Activated CD8-positive, alpha-beta T cell treated with anti-CD3 and anti-CD28 coated beads for 36 hours (primary cell): ENCODE measurements at regions of chr5 and their contacts with region 1.

Region 1: GRCh38 chr5:138352071-138352721 is at the start of gene KDM3B:
- DNase-seq: peak; percentile 88
- ATAC-seq: peak; percentile 91
- H3K4me3 Mint-ChIP-seq: peak within 1 kb of the TSS; percentile 92
- H3K27ac Mint-ChIP-seq: peak within 1 kb of the TSS; percentile 91
- H3K4me1 Mint-ChIP-seq: peaks cover 45% of the 10 kb centered on the region
- H3K27me3 Mint-ChIP-seq: no peaks in the 10 kb centered on the region
- CTCF ChIP-seq: peak; percentile 99
- total RNA-seq, gene KDM3B: 41.6 to 41.9 TPM

Region 2: GRCh38 chr5:138178516-138179276 is 173.5 kb before region 1 on chr5 and contains the starts of genes BRD8 and KIF20A:
- CTCF ChIA-PET with region 1: interaction called, 35 read pairs
- POLR2A ChIA-PET with region 1: interaction called, 12 read pairs
- intact Hi-C with region 1: no loop called
- DNase-seq: peak; percentile 98
- ATAC-seq: peak; percentile 91
- H3K4me3 Mint-ChIP-seq: no peak within 1 kb of the TSS
- H3K27ac Mint-ChIP-seq: no peak within 1 kb of the TSS
- H3K4me1 Mint-ChIP-seq: peaks cover 20% of the 10 kb centered on the region
- H3K27me3 Mint-ChIP-seq: no peaks in the 10 kb centered on the region
- CTCF ChIP-seq: no peak
- total RNA-seq, gene BRD8: 42.0 to 46.3 TPM
- total RNA-seq, gene KIF20A: 50.7 to 51.4 TPM

Region 3: DNA sequence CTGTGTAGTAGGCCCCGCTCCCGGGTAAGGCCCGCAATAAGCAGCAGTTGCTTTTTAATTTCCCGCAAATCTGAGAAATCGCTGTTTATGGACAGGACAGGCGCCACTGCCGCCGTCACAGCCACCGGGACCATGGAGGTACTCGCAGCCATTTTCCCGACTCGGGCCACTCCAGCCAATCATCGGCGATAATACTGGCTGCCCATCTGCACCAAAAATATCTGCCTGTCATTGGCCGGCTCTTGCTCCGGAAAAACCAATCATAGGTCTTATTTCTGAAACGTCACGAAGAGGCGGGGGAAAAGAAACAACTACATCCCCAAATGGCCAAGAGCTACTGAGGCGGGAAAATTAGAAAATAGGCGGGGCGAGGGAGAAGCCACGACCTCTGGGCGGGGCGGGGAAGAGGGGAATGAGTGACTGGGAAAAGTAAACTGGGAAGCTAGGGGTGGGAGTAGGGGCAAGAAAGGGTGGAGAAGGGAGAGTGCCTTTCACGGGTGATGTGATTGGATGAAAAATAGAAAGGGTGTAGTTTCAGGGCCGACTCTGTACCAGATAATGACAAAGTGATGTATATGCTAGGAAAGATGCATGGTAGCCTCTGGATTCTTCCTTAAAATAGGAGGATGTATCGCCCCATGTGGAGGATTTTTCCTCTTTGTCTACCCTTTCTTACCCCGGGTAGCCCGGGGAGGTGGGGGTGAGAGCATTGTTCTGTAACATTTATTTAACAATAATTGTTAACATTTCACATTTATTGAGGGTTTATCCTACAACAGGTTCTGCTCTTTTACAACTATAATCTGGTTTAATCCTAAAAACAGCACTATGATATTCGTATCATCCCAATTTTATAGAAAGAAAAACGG is 138.8 kb before region 1 on chr5 and contains the start of gene CDC23:
- CTCF ChIA-PET with region 1: interaction called, 36 read pairs
- POLR2A ChIA-PET with region 1: interaction called, 5 read pairs
- intact Hi-C with region 1: no loop called
- DNase-seq: peak; percentile 95
- ATAC-seq: peak; percentile 97
- H3K4me3 Mint-ChIP-seq: peak within 1 kb of the TSS; percentile 94
- H3K27ac Mint-ChIP-seq: peak within 1 kb of the TSS; percentile 98
- H3K4me1 Mint-ChIP-seq: peaks cover 16% of the 10 kb centered on the region
- H3K27me3 Mint-ChIP-seq: no peaks in the 10 kb centered on the region
- CTCF ChIP-seq: no peak
- total RNA-seq, gene CDC23: 40.4 to 43.8 TPM

Region 4: DNA sequence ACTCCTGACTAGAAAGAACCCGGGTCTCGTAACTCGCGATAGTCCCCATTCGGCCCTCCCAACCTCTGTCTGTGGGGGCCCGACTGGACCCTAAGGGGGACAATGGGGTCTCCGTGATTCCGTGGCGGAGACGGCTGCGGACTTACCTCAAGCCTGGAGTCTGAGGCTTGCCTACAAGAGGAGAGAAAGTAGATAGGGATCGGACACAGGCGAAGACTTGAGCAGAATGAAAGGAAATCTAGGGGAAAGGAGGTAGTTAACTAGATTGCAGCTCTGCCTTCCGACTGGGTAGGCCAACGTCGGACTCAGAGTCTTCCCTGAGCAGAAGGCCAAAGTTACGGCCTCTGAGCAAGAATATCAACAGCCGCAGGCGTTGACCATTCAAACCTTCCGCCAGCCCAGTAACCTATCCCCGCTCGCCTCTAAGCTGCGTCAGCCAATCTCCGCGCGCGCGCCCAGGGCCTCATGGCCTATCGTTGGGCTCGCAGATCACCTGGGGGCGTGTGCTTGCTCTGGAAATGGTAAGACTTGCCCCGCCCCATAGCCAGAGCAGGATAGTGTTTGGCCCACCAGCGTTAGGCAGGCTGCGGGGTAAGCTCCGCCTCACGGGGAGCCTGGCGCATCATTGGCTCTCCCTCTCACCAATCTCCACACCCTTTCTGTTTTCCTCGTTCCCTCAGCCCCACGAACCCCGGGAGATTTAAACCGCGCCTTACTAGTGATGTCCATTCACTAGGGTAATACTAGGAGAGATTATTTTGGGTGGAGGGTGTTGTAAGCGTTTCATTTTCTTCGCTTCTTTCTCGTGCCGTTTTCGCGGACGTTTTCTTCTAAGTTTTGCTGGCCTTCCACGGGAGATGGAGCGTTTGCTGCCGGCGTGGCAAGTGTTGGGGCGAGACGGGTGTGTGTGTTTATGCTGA is 20.5 kb before region 1 on chr5 and contains the start of gene CDC25C:
- CTCF ChIA-PET with region 1: interaction called, 322 read pairs
- POLR2A ChIA-PET with region 1: interaction called, 156 read pairs
- intact Hi-C with region 1: no loop called
- DNase-seq: peak; percentile 99
- ATAC-seq: peak; percentile 99
- H3K4me3 Mint-ChIP-seq: peak within 1 kb of the TSS; percentile 97
- H3K27ac Mint-ChIP-seq: peak within 1 kb of the TSS; percentile 86
- H3K4me1 Mint-ChIP-seq: peaks cover 13% of the 10 kb centered on the region
- H3K27me3 Mint-ChIP-seq: no peaks in the 10 kb centered on the region
- CTCF ChIP-seq: no peak
- total RNA-seq, gene CDC25C: 12.2 to 14.6 TPM

Region 5: DNA sequence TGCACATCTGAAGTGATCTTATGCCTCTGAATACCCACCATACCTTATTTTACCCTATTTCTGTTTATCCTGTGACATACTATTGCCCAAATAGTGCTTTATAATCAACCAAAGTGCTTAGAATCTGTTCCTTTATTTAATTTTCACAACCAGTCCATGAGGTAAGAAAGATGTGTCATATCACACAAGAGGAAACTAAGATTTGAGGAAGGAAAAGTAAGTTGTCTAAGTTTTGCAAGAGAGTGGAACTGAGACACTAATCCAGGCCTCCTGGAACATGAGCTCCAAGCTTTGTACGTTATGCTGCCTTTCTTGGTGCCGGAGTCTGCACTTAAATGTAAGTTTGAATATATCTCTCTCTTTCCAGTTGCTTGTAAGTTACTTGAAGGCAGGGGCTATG is 17.5 kb after region 1 on chr5:
- CTCF ChIA-PET with region 1: interaction called, 89 read pairs
- POLR2A ChIA-PET with region 1: interaction called, 6 read pairs
- intact Hi-C with region 1: no loop called
- DNase-seq: no peak
- ATAC-seq: no peak
- H3K4me3 Mint-ChIP-seq: no peak overlapping the region
- H3K27ac Mint-ChIP-seq: peak overlapping the region; percentile 6
- H3K4me1 Mint-ChIP-seq: peaks cover 38% of the 10 kb centered on the region
- H3K27me3 Mint-ChIP-seq: no peaks in the 10 kb centered on the region
- CTCF ChIP-seq: no peak

Region 6: GRCh38 chr5:138408023-138408422 is 55.8 kb after region 1 on chr5:
- CTCF ChIA-PET with region 1: interaction called, 70 read pairs
- POLR2A ChIA-PET with region 1: interaction called, 6 read pairs
- intact Hi-C with region 1: no loop called
- DNase-seq: peak; percentile 81
- ATAC-seq: peak; percentile 96
- H3K4me3 Mint-ChIP-seq: peak overlapping the region; percentile 19
- H3K27ac Mint-ChIP-seq: peak overlapping the region; percentile 38
- H3K4me1 Mint-ChIP-seq: peaks cover 14% of the 10 kb centered on the region
- H3K27me3 Mint-ChIP-seq: no peaks in the 10 kb centered on the region
- CTCF ChIP-seq: no peak

Region 7: DNA sequence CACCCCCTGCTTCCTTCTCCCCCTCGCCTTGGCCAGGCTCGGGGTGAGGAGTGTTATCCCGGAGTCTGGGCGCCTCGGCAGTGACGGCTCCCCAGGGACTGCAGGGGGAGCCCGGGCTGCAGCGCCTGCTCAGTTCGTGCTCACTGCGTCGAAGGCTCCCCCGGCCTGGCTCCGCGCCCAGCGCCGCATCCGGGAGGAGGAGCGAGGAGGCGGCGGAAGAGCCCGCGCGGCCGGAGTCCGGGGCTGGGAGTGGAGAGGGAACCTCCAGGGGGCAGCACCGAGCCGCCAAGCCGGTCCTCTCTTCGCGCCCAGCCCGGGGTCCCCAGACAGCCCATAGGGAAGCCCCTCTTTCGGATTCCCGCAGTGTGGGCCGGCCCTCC is 111.8 kb after region 1 on chr5:
- CTCF ChIA-PET with region 1: interaction called, 11 read pairs
- POLR2A ChIA-PET with region 1: interaction called, 5 read pairs
- intact Hi-C with region 1: no loop called
- DNase-seq: peak; percentile 94
- ATAC-seq: peak; percentile 57
- H3K4me3 Mint-ChIP-seq: peak overlapping the region; percentile 82
- H3K27ac Mint-ChIP-seq: peak overlapping the region; percentile 97
- H3K4me1 Mint-ChIP-seq: peaks cover 53% of the 10 kb centered on the region
- H3K27me3 Mint-ChIP-seq: no peaks in the 10 kb centered on the region
- CTCF ChIP-seq: peak; percentile 94